ENCODE measurements at regions of chr3 and their contacts with region 1.

Region 1: DNA sequence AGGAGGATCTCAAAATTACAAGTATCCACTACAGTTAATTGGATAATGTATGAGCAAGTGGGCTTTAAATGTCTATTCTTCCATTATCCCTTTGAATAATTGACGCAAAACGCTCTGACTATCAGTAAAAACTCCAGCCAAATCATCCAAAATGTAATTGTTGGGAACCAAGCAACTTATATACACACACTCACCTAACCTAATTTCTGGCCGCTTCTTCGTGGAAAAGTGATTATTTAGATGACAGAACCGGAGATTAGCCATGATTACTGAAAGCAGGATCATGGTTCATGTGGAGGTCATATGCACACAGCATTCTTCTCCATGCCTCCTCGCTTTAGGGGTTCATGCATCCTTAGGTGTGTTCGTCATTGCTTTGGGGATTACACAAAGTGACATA is 992.4 kb downstream of the NAALADL2 start:
- DNase-seq: no peak
- ATAC-seq: no peak
- H3K4me3 ChIP-seq: no peak overlapping the region
- H3K4me3 Mint-ChIP-seq: no peak overlapping the region
- H3K27ac ChIP-seq: no peak overlapping the region
- H3K27ac Mint-ChIP-seq: no peak overlapping the region
- H3K4me1 ChIP-seq: no peaks in the 10 kb centered on the region
- H3K4me1 Mint-ChIP-seq: no peaks in the 10 kb centered on the region
- H3K27me3 ChIP-seq: no peaks in the 10 kb centered on the region
- H3K27me3 Mint-ChIP-seq: no peaks in the 10 kb centered on the region

Region 2: DNA sequence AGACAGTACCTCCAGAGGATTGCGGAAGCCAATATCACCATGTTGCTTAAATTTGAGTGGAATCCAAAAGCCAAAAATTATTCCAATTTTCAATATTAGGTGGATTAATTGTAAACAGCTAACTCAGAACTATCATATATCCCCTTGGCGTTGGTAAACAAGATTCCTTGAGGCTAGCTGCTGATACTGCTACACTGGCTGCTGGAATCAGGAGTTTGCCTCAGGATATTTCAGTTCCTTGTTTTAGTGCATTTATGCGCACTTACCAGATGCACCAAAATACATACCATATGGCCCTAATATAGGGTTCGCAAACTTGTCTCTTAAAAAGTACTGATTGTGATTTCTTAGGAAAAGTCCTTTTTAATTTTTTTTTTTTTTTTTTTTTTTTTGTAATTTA is 1597.6 kb before region 1 on chr3:
- CTCF ChIA-PET with region 1: no interaction called
- POLR2A ChIA-PET with region 1: interaction called in 1 of 2 experiments, 15 read pairs
- DNase-seq: no peak
- ATAC-seq: no peak
- H3K4me3 ChIP-seq: no peak overlapping the region
- H3K4me3 Mint-ChIP-seq: no peak overlapping the region
- H3K27ac ChIP-seq: no peak overlapping the region
- H3K27ac Mint-ChIP-seq: no peak overlapping the region
- H3K4me1 ChIP-seq: no peaks in the 10 kb centered on the region
- H3K4me1 Mint-ChIP-seq: no peaks in the 10 kb centered on the region
- H3K27me3 ChIP-seq: no peaks in the 10 kb centered on the region
- H3K27me3 Mint-ChIP-seq: no peaks in the 10 kb centered on the region

Region 3: DNA sequence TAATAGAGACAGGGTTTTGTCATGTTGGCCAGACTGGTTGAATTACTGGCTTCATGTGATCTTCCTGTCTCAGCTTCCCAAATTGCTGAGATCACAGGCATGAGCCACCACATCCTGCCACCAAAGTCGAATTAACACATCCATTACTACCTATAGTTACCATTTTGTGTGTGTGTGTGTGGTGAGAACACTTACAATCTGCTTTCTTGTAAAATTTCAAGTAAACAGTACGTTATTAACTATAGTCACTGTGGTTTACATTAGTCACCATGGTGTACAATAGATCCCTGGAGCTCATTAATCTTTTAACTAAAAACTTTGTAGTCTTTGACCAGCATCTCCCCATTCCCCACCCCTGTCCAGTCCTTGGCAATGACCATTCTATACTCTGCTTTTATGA is 722.4 kb before region 1 on chr3:
- CTCF ChIA-PET with region 1: no interaction called
- POLR2A ChIA-PET with region 1: no interaction called
- DNase-seq: no peak
- ATAC-seq: no peak
- H3K4me3 ChIP-seq: no peak overlapping the region
- H3K4me3 Mint-ChIP-seq: no peak overlapping the region
- H3K27ac ChIP-seq: no peak overlapping the region
- H3K27ac Mint-ChIP-seq: no peak overlapping the region
- H3K4me1 ChIP-seq: no peaks in the 10 kb centered on the region
- H3K4me1 Mint-ChIP-seq: no peaks in the 10 kb centered on the region
- H3K27me3 ChIP-seq: no peaks in the 10 kb centered on the region
- H3K27me3 Mint-ChIP-seq: no peaks in the 10 kb centered on the region

Region 4: GRCh38 chr3:175861916-175862315 is 10.4 kb after region 1 on chr3:
- CTCF ChIA-PET with region 1: no interaction called
- POLR2A ChIA-PET with region 1: interaction called in 1 of 2 experiments, 12 read pairs
- DNase-seq: no peak
- ATAC-seq: no peak
- H3K4me3 ChIP-seq: no peak overlapping the region
- H3K4me3 Mint-ChIP-seq: no peak overlapping the region
- H3K27ac ChIP-seq: no peak overlapping the region
- H3K27ac Mint-ChIP-seq: no peak overlapping the region
- H3K4me1 ChIP-seq: no peaks in the 10 kb centered on the region
- H3K4me1 Mint-ChIP-seq: no peaks in the 10 kb centered on the region
- H3K27me3 ChIP-seq: no peaks in the 10 kb centered on the region
- H3K27me3 Mint-ChIP-seq: no peaks in the 10 kb centered on the region